HEK293 (cell line): ENCODE measurements at regions of chr9 and their contacts with region 1.

Region 1: DNA sequence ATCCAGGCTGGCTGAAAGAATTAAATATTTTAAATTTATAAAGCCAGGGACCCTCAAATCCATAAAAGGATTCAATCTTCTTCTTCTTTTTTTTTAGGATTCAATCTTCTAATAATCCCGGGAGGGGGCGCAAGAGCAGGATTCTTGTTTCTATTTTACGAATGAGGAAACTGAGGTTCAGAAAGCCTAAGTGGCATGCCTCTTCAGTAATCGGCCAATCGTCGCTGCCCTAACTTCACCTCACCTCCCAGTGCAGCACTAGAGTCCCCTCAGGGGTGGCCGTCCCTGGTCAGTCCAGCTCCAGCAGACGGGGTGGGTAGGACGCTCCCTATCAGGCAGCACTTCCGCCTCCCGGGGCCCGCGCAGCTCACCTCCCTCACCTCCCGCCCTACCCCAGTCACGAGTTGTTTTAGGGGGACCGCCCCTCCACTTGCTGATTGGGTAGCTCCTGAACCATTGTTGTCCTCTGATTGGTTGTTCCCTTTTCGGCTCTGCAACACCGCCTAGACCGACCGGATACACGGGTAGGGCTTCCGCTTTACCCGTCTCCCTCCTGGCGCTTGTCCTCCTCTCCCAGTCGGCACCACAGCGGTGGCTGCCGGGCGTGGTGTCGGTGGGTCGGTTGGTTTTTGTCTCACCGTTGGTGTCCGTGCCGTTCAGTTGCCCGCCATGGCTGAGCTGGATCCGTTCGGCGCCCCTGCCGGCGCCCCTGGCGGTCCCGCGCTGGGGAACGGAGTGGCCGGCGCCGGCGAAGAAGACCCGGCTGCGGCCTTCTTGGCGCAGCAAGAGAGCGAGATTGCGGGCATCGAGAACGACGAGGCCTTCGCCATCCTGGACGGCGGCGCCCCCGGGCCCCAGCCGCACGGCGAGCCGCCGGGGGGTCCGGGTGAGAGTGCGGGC is at the start of gene CLTA:
- H3K4me3 ChIP-seq: peak within 1 kb of the TSS; percentile 93
- H3K27ac ChIP-seq: peak within 1 kb of the TSS; percentile 84; the same call in 1 of the 2 replicates
- H3K4me1 ChIP-seq: 0 out of 2 replicates have a peak, but pooled peaks cover 6% of the 10 kb centered on the region
- CTCF ChIP-seq: peak; percentile 34; the same call in 1 of the 2 replicates

Region 2: GRCh38 chr9:35932735-35933134 is 257.9 kb before region 1 on chr9:
- CTCF ChIA-PET with region 1: no interaction called
- POLR2A ChIA-PET with region 1: no interaction called
- H3K4me3 ChIP-seq: no peak overlapping the region
- H3K27ac ChIP-seq: no peak overlapping the region
- H3K4me1 ChIP-seq: no peaks in the 10 kb centered on the region
- CTCF ChIP-seq: no peak

Region 3: DNA sequence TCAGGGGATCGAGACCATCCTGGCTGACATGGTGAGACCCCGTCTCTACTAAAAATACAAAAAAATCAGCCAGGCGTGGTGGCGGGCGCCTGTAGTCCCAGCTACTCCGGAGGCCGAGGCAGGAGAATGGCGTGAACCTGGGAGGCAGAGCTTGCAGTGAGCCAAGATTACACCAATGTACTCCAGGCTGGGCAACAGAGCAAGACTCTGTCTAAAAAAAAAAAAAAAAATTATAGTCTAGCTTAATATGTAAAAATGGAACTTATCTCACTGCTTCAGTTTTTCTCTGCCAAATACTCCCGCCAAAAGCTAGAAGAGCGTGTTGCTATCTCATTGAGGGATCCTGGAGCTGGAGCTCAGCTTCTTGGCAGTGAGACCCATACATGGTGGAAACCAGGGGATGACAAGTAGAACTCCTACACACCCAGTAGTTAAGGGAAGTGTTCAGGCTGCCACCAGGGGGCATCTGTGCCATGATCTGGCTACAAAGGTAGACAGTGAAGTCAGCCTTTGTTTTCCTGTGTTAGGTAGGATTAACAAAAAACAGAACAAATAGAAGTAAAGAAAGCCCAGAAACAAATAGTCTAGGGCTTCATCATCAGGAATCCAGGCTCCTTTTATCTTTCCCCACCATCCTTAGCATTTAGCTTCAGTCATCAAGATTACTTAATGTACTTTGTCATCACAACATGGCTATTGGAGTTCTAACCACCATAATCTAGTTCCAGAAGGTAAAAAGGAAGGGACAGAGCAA is 87.7 kb before region 1 on chr9:
- CTCF ChIA-PET with region 1: interaction called, 17 read pairs
- POLR2A ChIA-PET with region 1: interaction called, 18 read pairs
- H3K4me3 ChIP-seq: no peak overlapping the region
- H3K27ac ChIP-seq: no peak overlapping the region
- H3K4me1 ChIP-seq: no peaks in the 10 kb centered on the region
- CTCF ChIP-seq: no peak

Region 4: GRCh38 chr9:36123515-36123914 is 67.1 kb before region 1 on chr9:
- CTCF ChIA-PET with region 1: no interaction called
- POLR2A ChIA-PET with region 1: no interaction called
- H3K4me3 ChIP-seq: no peak overlapping the region
- H3K27ac ChIP-seq: no peak overlapping the region
- H3K4me1 ChIP-seq: no peaks in the 10 kb centered on the region
- CTCF ChIP-seq: no peak

Region 5: GRCh38 chr9:36148311-36149051 is 42.2 kb before region 1 on chr9:
- CTCF ChIA-PET with region 1: no interaction called
- POLR2A ChIA-PET with region 1: interaction called, 23 read pairs
- H3K4me3 ChIP-seq: no peak overlapping the region
- H3K27ac ChIP-seq: no peak overlapping the region
- H3K4me1 ChIP-seq: peaks cover 3% of the 10 kb centered on the region; the same call in 1 of the 2 replicates
- CTCF ChIP-seq: no peak

Region 6: DNA sequence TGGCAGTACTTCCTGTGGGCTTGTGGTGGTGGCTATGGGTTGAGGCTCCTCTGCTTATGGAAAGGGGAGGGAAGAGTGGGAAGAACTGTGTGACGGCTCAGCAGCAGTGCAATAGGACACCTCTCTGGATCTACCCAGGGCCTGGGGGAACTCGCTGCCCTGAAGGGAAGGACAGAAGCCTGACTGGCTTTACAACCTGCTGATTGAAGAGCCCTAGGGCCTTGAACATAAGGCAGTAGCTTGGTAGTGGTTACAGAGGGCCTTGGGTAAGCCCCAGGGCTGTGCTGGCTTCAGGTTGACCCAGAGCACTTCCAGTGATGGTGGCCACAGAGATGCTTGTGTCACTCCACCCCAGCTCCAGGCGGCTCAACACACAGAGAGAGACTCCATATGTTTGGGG is 15.9 kb before region 1 on chr9:
- CTCF ChIA-PET with region 1: interaction called, 4 read pairs
- POLR2A ChIA-PET with region 1: interaction called, 16 read pairs
- H3K4me3 ChIP-seq: no peak overlapping the region
- H3K27ac ChIP-seq: no peak overlapping the region
- H3K4me1 ChIP-seq: no peaks in the 10 kb centered on the region
- CTCF ChIP-seq: no peak

Region 7: GRCh38 chr9:36211510-36211909 is 20.9 kb after region 1 on chr9:
- CTCF ChIA-PET with region 1: interaction called, 4 read pairs
- POLR2A ChIA-PET with region 1: interaction called, 10 read pairs
- H3K4me3 ChIP-seq: no peak overlapping the region
- H3K27ac ChIP-seq: no peak overlapping the region
- H3K4me1 ChIP-seq: no peaks in the 10 kb centered on the region
- CTCF ChIP-seq: no peak

Region 8: GRCh38 chr9:36400332-36401163 is 209.9 kb after region 1 on chr9:
- CTCF ChIA-PET with region 1: no interaction called
- POLR2A ChIA-PET with region 1: interaction called, 11 read pairs
- H3K4me3 ChIP-seq: peak overlapping the region; percentile 97
- H3K27ac ChIP-seq: peak overlapping the region; percentile 90
- H3K4me1 ChIP-seq: peaks cover 5% of the 10 kb centered on the region
- CTCF ChIP-seq: peak; percentile 36; the same call in 1 of the 2 replicates